ENCODE measurements at regions of chr2 and their contacts with region 1.

Region 1: GRCh38 chr2:171762879-171763573 is 75.8 kb downstream of the DYNC1I2 start:
- DNase-seq: no peak
- ATAC-seq: no peak
- H3K4me3 ChIP-seq: no peak overlapping the region
- H3K4me3 Mint-ChIP-seq: no peak overlapping the region
- H3K27ac ChIP-seq: no peak overlapping the region
- H3K27ac Mint-ChIP-seq: no peak overlapping the region
- H3K4me1 ChIP-seq: no peaks in the 10 kb centered on the region
- H3K4me1 Mint-ChIP-seq: no peaks in the 10 kb centered on the region
- H3K27me3 ChIP-seq: no peaks in the 10 kb centered on the region
- H3K27me3 Mint-ChIP-seq: no peaks in the 10 kb centered on the region

Region 2: GRCh38 chr2:172059249-172059648 is 296.2 kb after region 1 on chr2:
- CTCF ChIA-PET with region 1: interaction called in 1 of 2 experiments, 10 read pairs
- POLR2A ChIA-PET with region 1: no interaction called
- DNase-seq: no peak
- ATAC-seq: no peak
- H3K4me3 ChIP-seq: no peak overlapping the region
- H3K4me3 Mint-ChIP-seq: no peak overlapping the region
- H3K27ac ChIP-seq: no peak overlapping the region
- H3K27ac Mint-ChIP-seq: no peak overlapping the region
- H3K4me1 ChIP-seq: no peaks in the 10 kb centered on the region
- H3K4me1 Mint-ChIP-seq: no peaks in the 10 kb centered on the region
- H3K27me3 ChIP-seq: no peaks in the 10 kb centered on the region
- H3K27me3 Mint-ChIP-seq: no peaks in the 10 kb centered on the region